Psoas muscle (tissue), 8 donors: ENCODE measurements at regions of chr13 and their contacts with region 1.

Region 1: GRCh38 chr13:41643507-41643906 is 186.2 kb downstream of the RGCC start:
- DNase-seq: no peak
- ATAC-seq: no peak
- H3K4me3 ChIP-seq: no peak overlapping the region
- H3K27ac ChIP-seq: no peak overlapping the region
- H3K4me1 ChIP-seq: peaks cover 28% of the 10 kb centered on the region
- H3K27me3 ChIP-seq: no peaks in the 10 kb centered on the region
- CTCF ChIP-seq: no peak

Region 2: GRCh38 chr13:41580345-41580744 is 63.2 kb before region 1 on chr13:
- intact Hi-C with region 1: loop called in 1 of 2 experiments (anchors 2 kb)
- DNase-seq: no peak
- ATAC-seq: no peak
- H3K4me3 ChIP-seq: no peak overlapping the region
- H3K27ac ChIP-seq: no peak overlapping the region
- H3K4me1 ChIP-seq: peaks cover 5% of the 10 kb centered on the region
- H3K27me3 ChIP-seq: no peaks in the 10 kb centered on the region
- CTCF ChIP-seq: no peak

Region 3: GRCh38 chr13:41864658-41865057 is 221.2 kb after region 1 on chr13:
- intact Hi-C with region 1: no loop called
- DNase-seq: no peak
- ATAC-seq: no peak
- H3K4me3 ChIP-seq: no peak overlapping the region
- H3K27ac ChIP-seq: no peak overlapping the region
- H3K4me1 ChIP-seq: no peaks in the 10 kb centered on the region
- H3K27me3 ChIP-seq: no peaks in the 10 kb centered on the region
- CTCF ChIP-seq: no peak